ENCODE measurements at regions of chr10 and their contacts with region 1.

Region 1: GRCh38 chr10:101587725-101588653 is at the starts of genes DPCD and POLL:
- DNase-seq: peak; percentile 90 to 94
- ATAC-seq: peak; percentile 92 to 99 (median 97)
- H3K4me3 ChIP-seq: peak within 1 kb of the TSS; percentile 94
- H3K4me3 Mint-ChIP-seq: peak within 1 kb of the TSS; percentile 92
- H3K27ac ChIP-seq: peak within 1 kb of the TSS; percentile 68
- H3K27ac Mint-ChIP-seq: peak within 1 kb of the TSS; percentile 75 to 93
- H3K4me1 ChIP-seq: peaks cover 19% of the 10 kb centered on the region
- H3K4me1 Mint-ChIP-seq: peaks cover 13 to 36% of the 10 kb centered on the region in 2 donors
- H3K27me3 ChIP-seq: no peaks in the 10 kb centered on the region
- H3K27me3 Mint-ChIP-seq: no peaks in the 10 kb centered on the region
- CTCF ChIP-seq: no peak
- total RNA-seq, gene DPCD: 0.72 to 1.0 (median 0.83) TPM
- total RNA-seq, gene POLL: 22.8 to 31.4 (median 26.1) TPM

Region 2: DNA sequence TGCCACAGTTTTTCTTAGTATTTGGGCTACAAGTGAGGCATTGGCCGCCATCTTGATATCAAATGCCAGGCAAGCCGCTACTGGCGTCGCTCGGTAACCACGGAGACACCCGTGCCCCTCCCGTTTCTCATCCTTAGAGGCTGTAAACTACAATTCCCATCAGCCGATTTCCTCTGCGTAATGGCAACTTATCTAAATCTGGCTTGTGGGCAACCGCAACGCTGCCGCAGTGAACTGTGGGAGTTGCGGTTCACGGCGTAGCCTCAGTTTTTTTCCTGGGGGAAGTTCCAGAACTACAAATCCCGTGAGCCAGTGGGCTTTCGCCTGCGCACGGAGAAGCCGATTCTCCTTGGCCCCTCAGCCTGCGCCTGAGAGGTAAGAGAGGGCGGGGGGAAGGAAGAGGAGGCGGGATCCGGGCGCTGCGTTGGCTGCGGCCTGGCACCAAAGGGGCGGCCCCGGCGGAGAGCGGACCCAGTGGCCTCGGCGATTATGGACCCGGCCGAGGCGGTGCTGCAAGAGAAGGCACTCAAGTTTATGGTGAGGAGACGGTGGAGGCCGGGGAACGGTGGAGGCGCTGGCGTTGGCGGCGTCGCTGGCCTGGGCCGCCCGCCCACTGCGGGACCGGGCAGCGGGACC is 234.2 kb before region 1 on chr10 and contains the start of gene BTRC:
- intact Hi-C with region 1: loop called (anchors 5 kb)
- DNase-seq: peak; percentile 94 to 99
- ATAC-seq: peak; percentile 91 to 96 (median 95)
- H3K4me3 ChIP-seq: peak within 1 kb of the TSS; percentile 55
- H3K4me3 Mint-ChIP-seq: peak within 1 kb of the TSS; percentile 98
- H3K27ac ChIP-seq: peak within 1 kb of the TSS; percentile 19
- H3K27ac Mint-ChIP-seq: peak within 1 kb of the TSS; percentile 88 to 97
- H3K4me1 ChIP-seq: peaks cover 10% of the 10 kb centered on the region
- H3K4me1 Mint-ChIP-seq: peaks cover 20 to 28% of the 10 kb centered on the region in 2 donors
- H3K27me3 ChIP-seq: no peaks in the 10 kb centered on the region
- H3K27me3 Mint-ChIP-seq: peaks cover 5 to 11% of the 10 kb centered on the region in 2 donors
- CTCF ChIP-seq: no peak
- total RNA-seq, gene BTRC: 13.5 to 22.8 (median 15.2) TPM

Measured in natural killer cell (primary cell).